ENCODE measurements at regions of chr14 and their contacts with region 1.

Region 1: GRCh38 chr14:65239143-65239937 is 137.0 kb upstream of the MAX start:
- DNase-seq: no peak
- ATAC-seq: no peak
- H3K4me3 ChIP-seq: no peak overlapping the region
- H3K4me3 Mint-ChIP-seq: no peak overlapping the region
- H3K27ac ChIP-seq: no peak overlapping the region
- H3K27ac Mint-ChIP-seq: no peak overlapping the region
- H3K4me1 ChIP-seq: peaks cover 5 to 12% of the 10 kb centered on the region in 2 experiments
- H3K4me1 Mint-ChIP-seq: peaks cover 4 to 10% (median 4%) of the 10 kb centered on the region in 3 donors
- H3K27me3 ChIP-seq: peaks cover 0 to 5% of the 10 kb centered on the region in 2 experiments
- H3K27me3 Mint-ChIP-seq: no peaks in the 10 kb centered on the region

Region 2: GRCh38 chr14:65044596-65044959 is 194.8 kb before region 1 on chr14:
- CTCF ChIA-PET with region 1: no interaction called
- POLR2A ChIA-PET with region 1: no interaction called
- DNase-seq: peak in 11 of 35 experiments; percentile 3 to 49 (median 25)
- ATAC-seq: peak in 1 of 4 experiments; percentile 34
- H3K4me3 ChIP-seq: no peak overlapping the region
- H3K4me3 Mint-ChIP-seq: no peak overlapping the region
- H3K27ac ChIP-seq: no peak overlapping the region
- H3K27ac Mint-ChIP-seq: no peak overlapping the region
- H3K4me1 ChIP-seq: peaks cover 3 to 4% of the 10 kb centered on the region in 2 experiments
- H3K4me1 Mint-ChIP-seq: peaks cover 7 to 15% (median 15%) of the 10 kb centered on the region in 3 donors
- H3K27me3 ChIP-seq: no peaks in the 10 kb centered on the region
- H3K27me3 Mint-ChIP-seq: no peaks in the 10 kb centered on the region

Region 3: DNA sequence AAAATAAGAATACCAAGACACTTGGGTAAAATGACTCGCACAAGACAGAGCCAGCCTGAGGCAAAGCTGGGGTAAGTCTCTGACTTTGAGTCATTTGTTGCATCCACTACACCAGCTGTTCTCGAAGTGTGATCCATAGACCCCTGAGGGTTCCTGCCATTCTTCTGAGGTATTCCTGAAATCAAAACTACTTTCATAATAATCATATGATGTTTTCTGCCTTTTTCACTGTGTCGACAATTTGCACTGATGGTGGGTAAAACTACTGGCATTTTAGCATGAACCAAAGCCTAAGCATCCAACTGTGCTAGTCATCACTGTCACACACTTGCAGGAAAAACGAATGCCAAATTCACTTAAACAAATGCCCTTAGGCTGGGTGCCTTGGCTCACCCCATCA is 37.7 kb after region 1 on chr14:
- CTCF ChIA-PET with region 1: no interaction called
- POLR2A ChIA-PET with region 1: interaction called in 1 of 2 experiments, 10 read pairs
- DNase-seq: no peak
- ATAC-seq: no peak
- H3K4me3 ChIP-seq: no peak overlapping the region
- H3K4me3 Mint-ChIP-seq: no peak overlapping the region
- H3K27ac ChIP-seq: no peak overlapping the region
- H3K27ac Mint-ChIP-seq: no peak overlapping the region
- H3K4me1 ChIP-seq: peaks cover 3 to 4% of the 10 kb centered on the region in 2 experiments
- H3K4me1 Mint-ChIP-seq: peaks cover 5 to 6% (median 5%) of the 10 kb centered on the region in 3 donors
- H3K27me3 ChIP-seq: no peaks in the 10 kb centered on the region
- H3K27me3 Mint-ChIP-seq: no peaks in the 10 kb centered on the region